ENCODE measurements at regions of chr6 and their contacts with region 1.

Region 1: GRCh38 chr6:90202156-90202555 is 94.5 kb downstream of the BACH2 start:
- DNase-seq: no peak
- H3K4me3 Mint-ChIP-seq: no peak overlapping the region
- H3K27ac Mint-ChIP-seq: peak overlapping the region; percentile 9
- H3K4me1 Mint-ChIP-seq: peaks cover 30% of the 10 kb centered on the region
- H3K27me3 Mint-ChIP-seq: no peaks in the 10 kb centered on the region

Region 2: DNA sequence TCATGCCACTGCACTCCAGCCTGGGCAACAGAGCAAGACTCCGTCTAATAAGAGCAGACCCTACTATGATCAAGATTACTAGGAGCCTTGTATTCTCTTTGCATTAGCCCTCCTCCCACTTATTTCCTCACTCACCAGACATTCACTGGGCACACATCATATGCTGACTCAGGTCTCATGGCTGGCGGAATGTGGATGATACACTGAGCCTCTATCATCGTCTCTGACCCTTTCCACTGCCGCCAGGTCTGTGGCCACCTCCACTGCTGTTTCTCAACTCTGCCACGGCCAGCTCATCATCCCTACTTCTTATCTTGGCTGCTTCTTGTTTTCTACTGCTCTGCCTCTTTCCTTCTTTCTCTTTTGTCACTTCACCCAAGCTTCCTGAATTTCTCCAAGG is 66.5 kb before region 1 on chr6:
- CTCF ChIA-PET with region 1: no interaction called
- POLR2A ChIA-PET with region 1: no interaction called
- intact Hi-C with region 1: no loop called
- DNase-seq: no peak
- H3K4me3 Mint-ChIP-seq: no peak overlapping the region
- H3K27ac Mint-ChIP-seq: no peak overlapping the region
- H3K4me1 Mint-ChIP-seq: peaks cover 30% of the 10 kb centered on the region
- H3K27me3 Mint-ChIP-seq: no peaks in the 10 kb centered on the region

Region 3: GRCh38 chr6:90216072-90216977 is 14.2 kb after region 1 on chr6:
- CTCF ChIA-PET with region 1: interaction called, 3 read pairs
- POLR2A ChIA-PET with region 1: no interaction called
- intact Hi-C with region 1: loop called (anchors 1 kb)
- DNase-seq: peak; percentile 39
- H3K4me3 Mint-ChIP-seq: no peak overlapping the region
- H3K27ac Mint-ChIP-seq: peak overlapping the region; percentile 56
- H3K4me1 Mint-ChIP-seq: peaks cover 27% of the 10 kb centered on the region
- H3K27me3 Mint-ChIP-seq: no peaks in the 10 kb centered on the region